ENCODE measurements at regions of chr2 and their contacts with region 1.

Region 1: DNA sequence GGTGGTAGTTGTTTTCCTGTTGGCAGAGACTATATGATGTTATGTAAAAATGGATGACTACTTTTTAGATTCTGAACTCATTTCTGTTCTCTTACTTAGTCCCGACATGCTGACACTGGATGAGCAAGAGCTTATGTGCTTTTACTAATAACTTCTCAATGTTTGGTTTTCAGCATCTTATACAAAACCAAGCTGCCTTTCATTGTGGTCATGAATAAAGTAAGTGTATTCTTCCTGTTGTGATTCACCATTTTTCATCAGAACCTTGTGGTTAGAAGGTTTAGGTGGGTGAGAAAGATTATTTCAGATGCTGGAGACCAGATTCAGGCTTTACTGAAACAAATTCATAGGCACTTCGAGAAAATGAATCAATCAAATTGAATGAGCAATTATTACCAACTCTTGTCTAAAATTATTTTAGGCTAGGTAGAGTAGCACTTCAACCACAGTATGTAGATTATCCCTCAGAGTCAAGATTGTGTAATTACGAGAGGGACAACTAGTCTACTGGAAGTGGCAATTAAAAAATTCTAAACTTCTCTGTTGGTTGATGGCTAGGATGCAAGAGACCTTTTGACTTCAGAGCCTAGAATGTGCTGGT is 9.3 kb downstream of the GPN1 start:
- DNase-seq: no peak
- H3K4me3 Mint-ChIP-seq: peak overlapping the region; percentile 67
- H3K27ac Mint-ChIP-seq: peak overlapping the region; percentile 97
- H3K4me1 Mint-ChIP-seq: peaks cover 38% of the 10 kb centered on the region
- H3K27me3 Mint-ChIP-seq: no peaks in the 10 kb centered on the region

Region 2: DNA sequence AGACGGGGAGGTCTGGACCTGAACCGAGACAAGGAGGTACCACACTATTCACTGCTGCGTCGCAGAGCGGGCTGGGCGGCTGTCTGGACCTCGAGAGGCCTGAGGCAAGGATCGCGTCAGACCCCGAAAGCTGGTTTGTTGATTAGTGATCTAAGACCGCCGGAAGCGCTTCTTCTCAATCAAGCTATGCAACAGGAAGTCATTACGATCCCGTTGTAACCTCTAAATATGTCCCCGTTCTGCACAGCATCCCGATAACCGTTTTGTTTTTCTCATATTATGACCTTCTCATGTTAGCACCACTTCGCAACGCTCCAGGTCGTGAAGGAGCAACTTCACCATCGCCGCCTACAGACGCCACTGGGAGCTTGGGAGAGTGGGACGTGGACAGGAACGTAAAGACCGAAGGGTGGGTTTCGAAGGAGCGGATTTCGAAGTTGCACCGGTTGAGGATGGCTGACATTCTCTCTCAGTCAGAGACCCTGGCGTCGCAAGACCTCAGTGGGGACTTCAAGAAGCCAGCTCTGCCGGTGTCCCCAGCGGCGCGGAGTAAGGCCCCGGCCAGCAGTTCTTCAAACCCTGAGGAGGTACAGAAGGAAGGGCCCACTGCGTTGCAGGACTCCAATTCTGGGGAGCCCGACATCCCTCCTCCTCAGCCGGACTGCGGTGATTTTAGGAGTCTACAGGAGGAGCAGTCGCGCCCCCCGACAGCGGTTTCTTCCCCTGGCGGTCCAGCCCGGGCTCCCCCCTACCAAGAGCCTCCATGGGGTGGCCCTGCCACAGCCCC is 25.5 kb after region 1 on chr2 and contains the starts of genes SLC4A1AP and SUPT7L:
- intact Hi-C with region 1: loop called (anchors 2 kb)
- DNase-seq: peak; percentile 72
- H3K4me3 Mint-ChIP-seq: peak within 1 kb of the TSS; percentile 100
- H3K27ac Mint-ChIP-seq: peak within 1 kb of the TSS; percentile 99
- H3K4me1 Mint-ChIP-seq: peaks cover 41% of the 10 kb centered on the region
- H3K27me3 Mint-ChIP-seq: no peaks in the 10 kb centered on the region
- total RNA-seq, gene SLC4A1AP: 26.7 and 27.8 TPM in 2 replicates
- total RNA-seq, gene SUPT7L: 32.5 and 37.0 TPM in 2 replicates

Region 3: GRCh38 chr2:27683390-27684071 is 45.4 kb after region 1 on chr2:
- intact Hi-C with region 1: loop called (anchors 5 kb)
- DNase-seq: peak; percentile 78
- H3K4me3 Mint-ChIP-seq: no peak overlapping the region
- H3K27ac Mint-ChIP-seq: peak overlapping the region; percentile 77
- H3K4me1 Mint-ChIP-seq: peaks cover 31% of the 10 kb centered on the region
- H3K27me3 Mint-ChIP-seq: no peaks in the 10 kb centered on the region

Region 4: GRCh38 chr2:27954771-27955383 is 316.7 kb after region 1 on chr2:
- intact Hi-C with region 1: no loop called
- DNase-seq: no peak
- H3K4me3 Mint-ChIP-seq: peak overlapping the region; percentile 53
- H3K27ac Mint-ChIP-seq: peak overlapping the region; percentile 72
- H3K4me1 Mint-ChIP-seq: peaks cover 81% of the 10 kb centered on the region
- H3K27me3 Mint-ChIP-seq: no peaks in the 10 kb centered on the region